HEK293 (cell line): ENCODE measurements at regions of chr2 and their contacts with region 1.

Region 1: GRCh38 chr2:219521066-219521880 is 7.0 kb downstream of the ASIC4 start:
- H3K4me3 ChIP-seq: no peak overlapping the region
- H3K27ac ChIP-seq: no peak overlapping the region
- H3K4me1 ChIP-seq: peaks cover 7% of the 10 kb centered on the region
- CTCF ChIP-seq: peak; percentile 85

Region 2: GRCh38 chr2:218806346-218806978 is 714.8 kb before region 1 on chr2:
- CTCF ChIA-PET with region 1: no interaction called
- POLR2A ChIA-PET with region 1: no interaction called
- H3K4me3 ChIP-seq: no peak overlapping the region
- H3K27ac ChIP-seq: peak overlapping the region; percentile 72
- H3K4me1 ChIP-seq: peaks cover 14% of the 10 kb centered on the region
- CTCF ChIP-seq: no peak

Region 3: GRCh38 chr2:219509780-219510511 is 11.3 kb before region 1 on chr2:
- CTCF ChIA-PET with region 1: interaction called, 137 read pairs
- POLR2A ChIA-PET with region 1: interaction called, 11 read pairs
- H3K4me3 ChIP-seq: peak overlapping the region; percentile 25
- H3K27ac ChIP-seq: no peak overlapping the region
- H3K4me1 ChIP-seq: peaks cover 2% of the 10 kb centered on the region
- CTCF ChIP-seq: peak; percentile 87

Region 4: GRCh38 chr2:219769090-219769910 is 248.0 kb after region 1 on chr2:
- CTCF ChIA-PET with region 1: no interaction called
- POLR2A ChIA-PET with region 1: no interaction called
- H3K4me3 ChIP-seq: no peak overlapping the region
- H3K27ac ChIP-seq: no peak overlapping the region
- H3K4me1 ChIP-seq: peaks cover 8% of the 10 kb centered on the region; the same call in 1 of the 2 replicates
- CTCF ChIP-seq: no peak